Transverse colon (tissue), 4 donors: ENCODE measurements at regions of chr12 and their contacts with region 1.

Region 1: DNA sequence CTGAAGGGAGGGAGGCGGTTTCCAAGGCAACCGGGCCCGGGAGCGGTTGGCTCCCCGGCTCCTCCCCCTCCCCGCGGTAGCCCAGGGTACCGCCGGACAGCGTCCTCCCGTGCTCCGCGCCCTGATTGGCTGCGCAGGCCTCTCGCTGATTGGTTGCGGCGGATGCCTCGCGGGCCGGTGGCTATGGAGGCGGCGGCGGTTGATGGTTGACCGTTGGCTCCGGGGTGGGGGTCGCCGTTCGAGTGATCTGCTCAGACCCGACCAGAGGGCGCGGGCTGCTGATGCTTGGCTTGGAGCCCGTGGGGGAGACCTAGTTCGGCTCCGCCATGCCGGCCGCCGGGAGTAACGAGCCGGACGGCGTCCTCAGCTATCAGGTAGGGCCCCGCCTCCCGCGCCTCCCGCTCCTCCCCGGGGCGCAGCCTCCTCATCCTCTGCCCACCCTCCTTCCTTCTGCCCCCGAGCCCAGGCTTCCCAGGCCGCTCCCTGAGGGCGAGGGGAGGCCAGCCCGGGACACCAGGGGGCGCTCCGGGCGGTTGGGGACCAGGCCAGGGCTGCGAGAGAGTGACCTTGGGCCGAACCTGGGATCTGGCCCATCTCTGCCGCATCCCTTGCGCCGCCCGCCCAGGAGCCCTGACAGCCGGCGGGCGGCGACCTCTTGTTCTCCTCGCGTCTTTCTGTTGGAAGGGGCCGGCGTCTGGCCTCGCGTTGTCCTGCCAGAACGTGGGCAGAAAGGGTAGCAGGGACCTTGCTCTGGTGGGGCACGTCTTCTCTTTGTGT is at the start of gene SLC4A8:
- DNase-seq: peak; percentile 78
- H3K4me3 ChIP-seq: peak within 1 kb of the TSS; percentile 16 to 55 (median 38)
- H3K27ac ChIP-seq: no peak within 1 kb of the TSS
- H3K4me1 ChIP-seq: peaks cover 0 to 15% (median 11%) of the 10 kb centered on the region in 4 donors
- H3K27me3 ChIP-seq: peaks cover 12% of the 10 kb centered on the region
- CTCF ChIP-seq: peak; percentile 55 to 78 (median 66)
- EP300 ChIP-seq: no peak
- POLR2A ChIP-seq: no peak
- total RNA-seq, gene SLC4A8: 0.64 to 2.2 (median 1.1) TPM in 3 of 4 donors, not detected in the other

Region 2: GRCh38 chr12:51521554-51522276 is 96.9 kb after region 1 on chr12:
- in situ Hi-C with region 1: loop called in 3 of 4 experiments (anchors 5 to 10 kb)
- intact Hi-C with region 1: loop called (anchors 10 kb)
- DNase-seq: no peak
- H3K4me3 ChIP-seq: no peak overlapping the region
- H3K27ac ChIP-seq: no peak overlapping the region
- H3K4me1 ChIP-seq: no peaks in the 10 kb centered on the region
- H3K27me3 ChIP-seq: no peaks in the 10 kb centered on the region
- CTCF ChIP-seq: peak in 1 of 5 experiments; percentile 5
- EP300 ChIP-seq: no peak
- POLR2A ChIP-seq: no peak

Region 3: GRCh38 chr12:51531978-51532497 is 107.2 kb after region 1 on chr12:
- in situ Hi-C with region 1: loop called in 3 of 4 experiments (anchors 5 to 10 kb)
- intact Hi-C with region 1: loop called (anchors 10 kb)
- DNase-seq: peak; percentile 79
- H3K4me3 ChIP-seq: no peak overlapping the region
- H3K27ac ChIP-seq: no peak overlapping the region
- H3K4me1 ChIP-seq: peaks cover 0 to 2% (median 0%) of the 10 kb centered on the region in 4 donors
- H3K27me3 ChIP-seq: peaks cover 22% of the 10 kb centered on the region
- CTCF ChIP-seq: peak; percentile 71 to 89 (median 85)
- EP300 ChIP-seq: no peak
- POLR2A ChIP-seq: no peak

Region 4: GRCh38 chr12:51814311-51815088 is 389.6 kb after region 1 on chr12:
- in situ Hi-C with region 1: loop called in 1 of 4 experiments (anchors 10 kb)
- intact Hi-C with region 1: no loop called
- DNase-seq: peak; percentile 86
- H3K4me3 ChIP-seq: peak overlapping the region; percentile 49 to 73 (median 68)
- H3K27ac ChIP-seq: peak overlapping the region; percentile 76 to 88 (median 84)
- H3K4me1 ChIP-seq: peaks cover 4 to 13% (median 10%) of the 10 kb centered on the region in 4 donors
- H3K27me3 ChIP-seq: no peaks in the 10 kb centered on the region
- CTCF ChIP-seq: peak in 4 of 5 experiments; percentile 41 to 66 (median 54)
- EP300 ChIP-seq: no peak
- POLR2A ChIP-seq: peak; percentile 38

Region 5: DNA sequence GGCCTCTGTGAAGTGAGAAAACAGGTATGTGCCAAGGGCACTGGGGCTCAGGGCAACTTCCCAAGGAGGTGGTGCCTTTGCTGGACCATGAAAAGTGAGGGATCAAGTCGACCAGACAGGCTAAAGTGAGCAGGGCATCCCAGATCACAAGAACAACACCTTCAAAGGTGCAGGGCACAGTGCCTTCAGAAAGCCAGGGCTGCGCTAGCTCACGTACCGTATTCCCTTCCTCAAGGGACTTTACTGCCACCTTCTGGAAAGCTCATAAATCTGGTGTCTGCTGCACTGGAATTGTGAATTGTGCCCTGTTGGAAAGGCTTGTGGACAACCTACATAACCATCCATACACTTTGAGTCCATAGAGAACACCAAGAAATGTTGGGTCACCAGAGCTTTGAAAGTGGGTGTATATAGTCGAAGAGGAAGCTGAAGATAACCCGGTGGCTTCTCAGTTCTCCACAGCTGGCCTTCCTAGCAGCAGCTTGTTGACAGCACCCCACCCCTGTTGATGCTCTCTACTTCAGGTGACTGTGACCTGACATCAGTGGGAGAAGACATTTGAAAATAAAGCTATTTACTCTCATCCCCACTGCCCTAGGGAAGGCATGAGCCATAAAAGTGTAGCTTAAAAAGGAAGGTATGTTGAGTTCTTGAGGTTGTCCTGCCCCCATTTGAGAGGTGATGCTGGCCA is 399.2 kb after region 1 on chr12:
- in situ Hi-C with region 1: loop called in 3 of 4 experiments (anchors 10 kb)
- intact Hi-C with region 1: no loop called
- DNase-seq: peak; percentile 34
- H3K4me3 ChIP-seq: no peak overlapping the region
- H3K27ac ChIP-seq: no peak overlapping the region
- H3K4me1 ChIP-seq: peaks cover 4 to 22% (median 11%) of the 10 kb centered on the region in 4 donors
- H3K27me3 ChIP-seq: peaks cover 4% of the 10 kb centered on the region
- CTCF ChIP-seq: peak; percentile 8 to 46 (median 43)
- EP300 ChIP-seq: no peak
- POLR2A ChIP-seq: no peak